GM10248 (cell line): ENCODE measurements at regions of chr1 and their contacts with region 1.

Region 1: GRCh38 chr1:145871994-145872924 is 13.4 kb upstream of the PIAS3 start:
- DNase-seq: peak; percentile 65
- CTCF ChIP-seq: no peak

Region 2: DNA sequence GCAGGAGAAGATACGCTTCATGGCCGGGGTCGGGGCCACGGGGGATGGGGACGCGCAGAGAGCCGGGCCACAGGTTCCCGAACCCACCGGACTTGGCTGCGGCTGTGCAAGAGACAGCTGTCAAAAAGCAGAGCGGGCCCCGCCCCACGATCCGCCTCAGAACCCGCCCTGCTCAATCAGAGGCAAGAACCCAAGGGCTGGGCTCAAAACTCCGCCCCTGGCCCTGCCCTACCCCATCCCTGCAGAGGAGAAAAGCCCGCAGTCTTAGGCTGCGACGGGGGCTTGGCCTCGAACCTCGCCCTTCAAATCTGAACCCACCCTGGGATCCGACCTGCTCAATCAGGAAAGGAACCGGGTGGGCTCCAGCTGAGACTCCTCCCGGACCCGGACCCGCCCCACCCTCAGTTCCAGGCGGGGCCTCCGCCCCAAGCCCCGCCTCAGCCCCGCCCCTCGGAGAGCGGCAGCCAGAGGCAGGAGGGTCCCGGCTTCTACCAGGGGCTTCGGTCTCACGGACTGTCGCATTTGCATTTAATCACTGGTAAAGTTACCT is 13.6 kb after region 1 on chr1 and contains the start of gene ANKRD35:
- CTCF ChIA-PET with region 1: interaction called, 17 read pairs
- POLR2A ChIA-PET with region 1: no interaction called
- DNase-seq: peak; percentile 96
- CTCF ChIP-seq: no peak